Transverse colon (tissue), 4 donors: ENCODE measurements at regions of chr2 and their contacts with region 1.

Region 1: GRCh38 chr2:160970052-160970965 is 189.9 kb upstream of the TANK start:
- DNase-seq: peak; percentile 28
- H3K4me3 ChIP-seq: peak overlapping the region in 1 of 4 donors; percentile 13
- H3K27ac ChIP-seq: peak overlapping the region; percentile 36 to 67 (median 48)
- H3K4me1 ChIP-seq: peaks cover 0 to 3% (median 0%) of the 10 kb centered on the region in 4 donors
- H3K27me3 ChIP-seq: no peaks in the 10 kb centered on the region
- CTCF ChIP-seq: peak; percentile 54 to 76 (median 62)
- EP300 ChIP-seq: no peak
- POLR2A ChIP-seq: no peak

Region 2: DNA sequence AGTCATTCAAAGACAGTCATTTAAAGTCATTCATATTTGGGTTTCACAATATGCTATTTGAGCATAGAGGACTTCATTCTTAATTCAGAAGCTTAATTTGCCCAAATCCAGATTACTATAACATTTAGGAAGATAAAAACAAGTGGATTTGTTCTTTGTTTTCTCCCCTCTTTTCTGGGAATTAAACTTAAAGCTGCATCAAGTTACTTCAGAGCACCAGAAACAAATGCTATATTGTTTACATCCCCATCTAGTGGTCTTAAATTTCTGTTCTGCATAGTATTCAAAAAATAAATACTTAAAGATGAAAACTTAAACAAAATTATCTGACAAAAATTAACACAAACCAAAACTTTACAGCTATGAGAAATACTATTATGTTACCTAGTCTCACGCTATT is 1292.7 kb before region 1 on chr2:
- in situ Hi-C with region 1: no loop called
- intact Hi-C with region 1: loop called (anchors 5 kb)
- DNase-seq: no peak
- H3K4me3 ChIP-seq: no peak overlapping the region
- H3K27ac ChIP-seq: no peak overlapping the region
- H3K4me1 ChIP-seq: no peaks in the 10 kb centered on the region
- H3K27me3 ChIP-seq: no peaks in the 10 kb centered on the region
- CTCF ChIP-seq: peak in 2 of 5 experiments; percentile 7 to 17
- EP300 ChIP-seq: no peak
- POLR2A ChIP-seq: no peak

Region 3: GRCh38 chr2:160087854-160088745 is 882.2 kb before region 1 on chr2:
- in situ Hi-C with region 1: loop called in 1 of 4 experiments (anchors 25 kb)
- intact Hi-C with region 1: no loop called
- DNase-seq: no peak
- H3K4me3 ChIP-seq: no peak overlapping the region
- H3K27ac ChIP-seq: no peak overlapping the region
- H3K4me1 ChIP-seq: no peaks in the 10 kb centered on the region
- H3K27me3 ChIP-seq: no peaks in the 10 kb centered on the region
- CTCF ChIP-seq: peak in 3 of 5 experiments; percentile 24 to 36 (median 30)
- EP300 ChIP-seq: no peak
- POLR2A ChIP-seq: no peak

Region 4: GRCh38 chr2:160666154-160667060 is 303.9 kb before region 1 on chr2:
- in situ Hi-C with region 1: no loop called
- intact Hi-C with region 1: no loop called
- DNase-seq: no peak
- H3K4me3 ChIP-seq: no peak overlapping the region
- H3K27ac ChIP-seq: peak overlapping the region; percentile 70 to 84 (median 78)
- H3K4me1 ChIP-seq: peaks cover 0 to 18% (median 7%) of the 10 kb centered on the region in 4 donors
- H3K27me3 ChIP-seq: no peaks in the 10 kb centered on the region
- CTCF ChIP-seq: no peak
- EP300 ChIP-seq: no peak
- POLR2A ChIP-seq: no peak

Region 5: DNA sequence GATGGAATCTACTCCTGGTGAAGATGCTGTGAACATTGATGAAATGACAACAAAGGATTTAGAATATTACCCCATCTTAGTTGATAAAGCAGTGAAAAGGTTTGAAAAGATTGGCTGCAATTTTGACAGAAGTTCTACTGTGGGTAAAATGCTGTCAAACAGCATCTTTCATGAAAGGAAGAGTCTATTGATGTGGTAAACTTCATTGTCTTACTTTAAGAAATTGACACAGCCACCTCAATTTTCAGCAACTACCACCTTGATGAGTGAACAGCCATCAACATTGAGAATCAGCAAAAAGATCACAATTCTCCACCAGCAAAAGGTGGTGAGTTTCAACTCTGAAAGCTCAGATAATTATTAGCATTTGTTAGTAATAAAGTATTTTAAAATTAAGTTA is 166.4 kb before region 1 on chr2:
- in situ Hi-C with region 1: no loop called
- intact Hi-C with region 1: no loop called
- DNase-seq: no peak
- H3K4me3 ChIP-seq: no peak overlapping the region
- H3K27ac ChIP-seq: no peak overlapping the region
- H3K4me1 ChIP-seq: no peaks in the 10 kb centered on the region
- H3K27me3 ChIP-seq: no peaks in the 10 kb centered on the region
- CTCF ChIP-seq: no peak
- EP300 ChIP-seq: no peak
- POLR2A ChIP-seq: no peak

Region 6: DNA sequence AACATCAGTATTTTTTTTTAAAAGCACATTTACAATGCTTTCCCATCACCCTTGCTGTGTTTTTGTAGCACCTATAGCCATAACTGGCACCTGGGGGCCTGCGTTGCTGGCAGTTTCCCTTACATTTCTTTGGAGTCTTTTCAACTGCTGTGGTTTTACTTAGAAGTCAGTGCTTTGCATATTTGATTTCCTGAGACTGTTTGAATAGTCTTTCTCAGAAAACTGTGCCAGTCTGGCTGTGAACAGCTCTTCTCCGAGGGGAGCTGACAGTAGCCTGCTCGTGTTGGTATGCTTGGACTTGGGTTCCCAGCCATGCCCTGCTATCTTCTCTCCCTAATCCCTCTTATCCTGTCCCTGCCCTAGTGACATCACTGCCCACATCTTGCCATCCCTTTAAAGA is 1022.2 kb after region 1 on chr2:
- in situ Hi-C with region 1: no loop called
- intact Hi-C with region 1: no loop called
- DNase-seq: no peak
- H3K4me3 ChIP-seq: no peak overlapping the region
- H3K27ac ChIP-seq: no peak overlapping the region
- H3K4me1 ChIP-seq: peaks cover 0 to 6% (median 0%) of the 10 kb centered on the region in 4 donors
- H3K27me3 ChIP-seq: no peaks in the 10 kb centered on the region
- CTCF ChIP-seq: no peak
- EP300 ChIP-seq: no peak
- POLR2A ChIP-seq: no peak